ENCODE measurements at regions of chr11 and their contacts with region 1.

Region 1: GRCh38 chr11:72024069-72024754 is 25.5 kb downstream of the IL18BP start:
- DNase-seq: no peak
- ATAC-seq: no peak
- H3K4me3 ChIP-seq: no peak overlapping the region
- H3K27ac ChIP-seq: no peak overlapping the region; the same call in 1 of the 2 replicates
- H3K4me1 ChIP-seq: peaks cover 9% of the 10 kb centered on the region
- H3K27me3 ChIP-seq: no peaks in the 10 kb centered on the region
- CTCF ChIP-seq: no peak
- POLR2A ChIP-seq: no peak
- RAD21 ChIP-seq: no peak

Region 2: GRCh38 chr11:72040726-72041441 is 16.7 kb after region 1 on chr11:
- CTCF ChIA-PET with region 1: interaction called, 12 read pairs
- POLR2A ChIA-PET with region 1: interaction called, 4 read pairs
- dilution Hi-C with region 1: no loop called
- in situ Hi-C with region 1: no loop called
- intact Hi-C with region 1: no loop called
- DNase-seq: peak; percentile 95
- ATAC-seq: peak; percentile 67
- H3K4me3 ChIP-seq: peak overlapping the region; percentile 76
- H3K27ac ChIP-seq: peak overlapping the region; percentile 95
- H3K4me1 ChIP-seq: peaks cover 10% of the 10 kb centered on the region
- H3K27me3 ChIP-seq: no peaks in the 10 kb centered on the region
- CTCF ChIP-seq: no peak
- POLR2A ChIP-seq: peak; percentile 67; the same call in 1 of the 2 replicates
- RAD21 ChIP-seq: peak; percentile 15; the same call in 1 of the 2 replicates

Region 3: GRCh38 chr11:72085621-72086351 is 61.6 kb after region 1 on chr11:
- CTCF ChIA-PET with region 1: interaction called, 37 read pairs
- POLR2A ChIA-PET with region 1: no interaction called
- dilution Hi-C with region 1: no loop called
- in situ Hi-C with region 1: loop called (anchors 10 kb)
- intact Hi-C with region 1: loop called (anchors 1 kb)
- DNase-seq: no peak
- ATAC-seq: no peak
- H3K4me3 ChIP-seq: no peak overlapping the region
- H3K27ac ChIP-seq: no peak overlapping the region
- H3K4me1 ChIP-seq: no peaks in the 10 kb centered on the region
- H3K27me3 ChIP-seq: no peaks in the 10 kb centered on the region
- CTCF ChIP-seq: no peak
- POLR2A ChIP-seq: no peak
- RAD21 ChIP-seq: no peak

Region 4: DNA sequence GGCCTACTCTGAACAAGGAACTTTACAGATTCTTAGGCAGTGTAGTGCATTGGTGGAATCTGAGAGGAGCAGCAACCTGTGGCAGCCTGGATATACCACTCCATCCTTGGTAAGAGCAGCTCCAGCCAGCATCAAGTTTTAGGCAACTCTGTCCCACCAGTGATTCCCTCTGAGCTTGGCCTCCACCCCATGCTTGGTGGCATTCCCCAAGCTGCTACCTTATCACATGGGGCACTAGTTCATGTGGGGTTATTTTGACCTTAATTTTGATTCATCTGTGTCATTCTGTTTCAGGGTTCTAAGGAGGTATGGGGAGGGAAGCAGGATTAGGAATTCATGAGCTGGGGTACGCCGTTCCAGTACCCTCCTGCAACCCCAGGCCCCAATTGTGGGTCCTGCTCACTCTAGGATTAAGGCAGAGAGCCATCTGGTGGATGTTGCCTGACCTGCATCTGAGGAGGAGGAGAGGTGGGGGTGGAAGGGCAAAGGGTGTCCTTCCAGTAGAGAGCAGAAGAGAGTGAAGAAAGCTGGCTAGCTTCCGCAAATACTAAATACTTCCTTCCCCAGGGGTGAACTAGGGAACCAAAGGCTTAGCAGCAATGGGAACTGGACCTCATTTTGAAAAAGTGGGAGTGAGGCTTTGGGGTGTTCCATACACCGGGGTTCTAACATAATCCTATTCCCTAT is 66.9 kb after region 1 on chr11:
- CTCF ChIA-PET with region 1: interaction called, 37 read pairs
- POLR2A ChIA-PET with region 1: no interaction called
- dilution Hi-C with region 1: no loop called
- in situ Hi-C with region 1: loop called (anchors 10 kb)
- intact Hi-C with region 1: loop called (anchors 1 kb)
- DNase-seq: peak; percentile 54
- ATAC-seq: peak; percentile 95
- H3K4me3 ChIP-seq: no peak overlapping the region
- H3K27ac ChIP-seq: no peak overlapping the region
- H3K4me1 ChIP-seq: no peaks in the 10 kb centered on the region
- H3K27me3 ChIP-seq: no peaks in the 10 kb centered on the region
- CTCF ChIP-seq: peak; percentile 91
- POLR2A ChIP-seq: no peak
- RAD21 ChIP-seq: peak; percentile 79

Region 5: GRCh38 chr11:72308226-72309073 is 284.2 kb after region 1 on chr11:
- CTCF ChIA-PET with region 1: no interaction called
- POLR2A ChIA-PET with region 1: no interaction called
- dilution Hi-C with region 1: no loop called
- in situ Hi-C with region 1: no loop called
- intact Hi-C with region 1: no loop called
- DNase-seq: peak; percentile 98
- ATAC-seq: peak; percentile 95
- H3K4me3 ChIP-seq: no peak overlapping the region
- H3K27ac ChIP-seq: peak overlapping the region; percentile 21; the same call in 1 of the 2 replicates
- H3K4me1 ChIP-seq: peaks cover 9% of the 10 kb centered on the region
- H3K27me3 ChIP-seq: no peaks in the 10 kb centered on the region
- CTCF ChIP-seq: no peak
- POLR2A ChIP-seq: no peak
- RAD21 ChIP-seq: no peak; the same call in 1 of the 2 replicates

Region 6: DNA sequence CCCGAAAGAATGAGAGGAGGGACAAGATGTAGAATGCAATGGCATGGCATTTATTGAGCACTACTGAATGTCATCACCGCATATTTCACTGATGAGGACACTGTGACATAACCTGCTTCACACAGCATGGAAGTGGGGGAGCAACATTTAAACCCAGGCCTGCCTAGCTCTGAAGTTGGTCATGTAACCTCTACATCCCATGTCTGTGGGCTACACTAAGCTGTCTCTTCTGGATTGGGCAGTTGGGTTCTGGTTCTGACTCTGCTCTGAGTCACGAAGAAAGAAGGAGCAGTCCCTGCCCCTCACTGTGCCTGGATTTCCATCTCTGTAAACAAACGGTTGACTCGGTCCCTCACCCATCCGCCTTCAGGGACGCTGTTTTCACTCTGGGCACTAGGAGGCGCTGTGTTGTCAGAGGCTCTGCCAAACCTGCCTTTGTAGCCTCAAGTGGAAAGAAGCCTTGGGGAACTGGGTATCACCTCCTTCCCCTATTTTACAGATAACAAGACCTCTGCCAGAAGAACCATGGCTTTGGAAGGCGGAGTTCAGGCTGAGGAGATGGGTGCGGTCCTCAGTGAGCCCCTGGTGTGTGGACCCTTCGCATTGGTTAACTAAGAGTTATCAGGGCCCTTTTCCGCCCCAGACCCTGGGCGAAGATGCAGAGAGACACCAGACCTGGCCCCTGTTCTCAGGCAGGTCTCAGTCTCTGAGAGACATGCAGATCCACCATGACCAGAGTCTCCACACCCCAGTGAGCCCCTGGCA is 1271.2 kb after region 1 on chr11:
- CTCF ChIA-PET with region 1: no interaction called
- POLR2A ChIA-PET with region 1: no interaction called
- dilution Hi-C with region 1: no loop called
- in situ Hi-C with region 1: no loop called
- intact Hi-C with region 1: no loop called
- DNase-seq: peak; percentile 91
- ATAC-seq: peak; percentile 93
- H3K4me3 ChIP-seq: no peak overlapping the region
- H3K27ac ChIP-seq: peak overlapping the region; percentile 19
- H3K4me1 ChIP-seq: peaks cover 1% of the 10 kb centered on the region; the same call in 1 of the 2 replicates
- H3K27me3 ChIP-seq: no peaks in the 10 kb centered on the region
- CTCF ChIP-seq: peak; percentile 93
- POLR2A ChIP-seq: no peak
- RAD21 ChIP-seq: peak; percentile 76

Measured in IMR-90 (cell line).